Activated B cell treated with CpG ODN at 0.5 μM for 24 hours (primary cell): ENCODE measurements at regions of chr18 and their contacts with region 1.

Region 1: GRCh38 chr18:24051031-24051947 is 36.7 kb downstream of the TTC39C start:
- DNase-seq: no peak
- ATAC-seq: peak; percentile 76
- H3K4me3 Mint-ChIP-seq: peak overlapping the region; percentile 0
- H3K27ac Mint-ChIP-seq: peak overlapping the region; percentile 32
- H3K4me1 Mint-ChIP-seq: peaks cover 63% of the 10 kb centered on the region
- H3K27me3 Mint-ChIP-seq: no peaks in the 10 kb centered on the region
- CTCF ChIP-seq: no peak

Region 2: GRCh38 chr18:24019641-24020331 is 31.5 kb before region 1 on chr18:
- CTCF ChIA-PET with region 1: no interaction called
- POLR2A ChIA-PET with region 1: interaction called, 3 read pairs
- intact Hi-C with region 1: loop called (anchors 2 kb)
- DNase-seq: no peak
- ATAC-seq: peak; percentile 72
- H3K4me3 Mint-ChIP-seq: peak overlapping the region; percentile 79
- H3K27ac Mint-ChIP-seq: peak overlapping the region; percentile 93
- H3K4me1 Mint-ChIP-seq: peaks cover 85% of the 10 kb centered on the region
- H3K27me3 Mint-ChIP-seq: no peaks in the 10 kb centered on the region
- CTCF ChIP-seq: no peak

Region 3: GRCh38 chr18:24075731-24076130 is 24.4 kb after region 1 on chr18:
- CTCF ChIA-PET with region 1: no interaction called
- POLR2A ChIA-PET with region 1: no interaction called
- intact Hi-C with region 1: loop called (anchors 2 kb)
- DNase-seq: no peak
- ATAC-seq: no peak
- H3K4me3 Mint-ChIP-seq: no peak overlapping the region
- H3K27ac Mint-ChIP-seq: no peak overlapping the region
- H3K4me1 Mint-ChIP-seq: peaks cover 4% of the 10 kb centered on the region
- H3K27me3 Mint-ChIP-seq: no peaks in the 10 kb centered on the region
- CTCF ChIP-seq: no peak

Region 4: DNA sequence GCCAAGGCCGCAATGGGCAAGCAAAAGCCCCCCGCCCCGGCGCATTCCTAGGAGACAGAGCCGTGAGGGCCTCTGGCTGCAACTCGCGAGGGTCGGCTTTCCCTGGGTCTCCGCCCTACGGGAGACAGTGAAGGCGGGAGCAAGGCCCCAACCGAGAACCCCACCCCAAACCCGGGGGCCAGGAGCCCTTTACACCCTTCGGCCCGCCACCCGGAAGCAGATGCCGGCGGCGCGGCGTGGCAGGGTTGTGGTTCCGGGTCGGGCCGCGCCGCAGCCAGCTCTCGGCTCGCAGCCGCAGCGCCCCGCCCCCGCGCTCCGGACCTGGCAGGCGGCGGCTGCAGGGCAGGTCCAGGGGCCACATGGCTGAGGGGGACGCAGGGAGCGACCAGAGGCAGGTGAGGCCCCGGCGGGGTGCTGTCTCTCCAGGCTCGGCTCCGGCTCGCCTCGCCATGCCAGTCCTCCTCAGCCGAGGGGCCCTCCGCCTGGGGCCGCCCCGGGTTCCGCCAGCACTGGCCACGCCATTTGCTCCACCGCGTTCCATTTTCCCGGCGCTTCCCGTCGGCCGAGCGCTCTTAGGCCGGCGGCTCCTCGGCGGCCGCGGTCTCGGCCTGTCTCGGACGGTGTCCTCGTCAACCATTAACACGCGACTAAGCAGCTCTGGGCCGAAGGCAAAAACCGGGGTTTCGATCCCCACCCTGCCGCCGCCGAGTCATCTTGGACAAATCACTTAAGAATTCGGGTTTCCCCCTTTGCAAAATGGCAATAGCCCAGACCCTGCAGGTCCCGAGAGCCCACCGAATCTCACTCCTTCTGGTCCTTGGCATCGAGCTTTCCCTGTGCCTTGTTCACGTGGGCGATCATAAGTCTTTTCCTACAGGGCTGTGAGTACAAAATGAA is 375.4 kb after region 1 on chr18 and contains the start of gene IMPACT:
- CTCF ChIA-PET with region 1: no interaction called
- POLR2A ChIA-PET with region 1: no interaction called
- intact Hi-C with region 1: loop called (anchors 2 kb)
- DNase-seq: peak; percentile 80
- ATAC-seq: peak; percentile 91
- H3K4me3 Mint-ChIP-seq: peak within 1 kb of the TSS; percentile 93
- H3K27ac Mint-ChIP-seq: peak within 1 kb of the TSS; percentile 87
- H3K4me1 Mint-ChIP-seq: peaks cover 20% of the 10 kb centered on the region
- H3K27me3 Mint-ChIP-seq: peaks cover 23% of the 10 kb centered on the region
- CTCF ChIP-seq: no peak
- total RNA-seq, gene IMPACT: 11.6 and 17.4 TPM in 2 replicates

Region 5: DNA sequence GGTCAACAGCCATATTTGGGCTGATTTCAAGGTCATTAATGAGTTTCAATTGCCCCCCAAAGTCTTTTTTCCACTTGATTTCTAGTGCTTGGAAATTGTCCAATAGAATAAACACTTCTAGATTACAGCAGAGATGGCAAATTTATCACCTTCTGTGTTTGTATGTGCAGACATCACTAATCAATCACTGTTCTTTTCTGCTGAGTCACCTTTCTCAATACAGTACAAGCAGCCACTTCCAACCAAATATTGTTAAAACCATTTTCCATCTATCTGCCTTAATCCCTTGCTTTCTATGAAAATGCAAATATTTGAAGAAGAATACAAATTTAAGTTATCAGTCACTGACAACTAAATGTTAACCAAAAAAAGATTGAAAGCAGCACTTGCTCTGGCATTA is 1340.9 kb after region 1 on chr18:
- CTCF ChIA-PET with region 1: no interaction called
- POLR2A ChIA-PET with region 1: no interaction called
- intact Hi-C with region 1: no loop called
- DNase-seq: no peak
- ATAC-seq: no peak
- H3K4me3 Mint-ChIP-seq: no peak overlapping the region
- H3K27ac Mint-ChIP-seq: no peak overlapping the region
- H3K4me1 Mint-ChIP-seq: no peaks in the 10 kb centered on the region
- H3K27me3 Mint-ChIP-seq: no peaks in the 10 kb centered on the region
- CTCF ChIP-seq: no peak